Naive thymus-derived CD4-positive, alpha-beta T cell (primary cell): ENCODE measurements at regions of chr13 and their contacts with region 1.

Region 1: GRCh38 chr13:20475927-20476691 is 49.5 kb downstream of the CRYL1 start:
- DNase-seq: peak; percentile 46 to 90 (median 84)
- ATAC-seq: peak; percentile 96
- H3K4me3 ChIP-seq: peak overlapping the region; percentile 59
- H3K4me3 Mint-ChIP-seq: peak overlapping the region; percentile 77 to 92 (median 86)
- H3K27ac ChIP-seq: peak overlapping the region; percentile 77
- H3K27ac Mint-ChIP-seq: peak overlapping the region; percentile 89 to 99 (median 98)
- H3K4me1 ChIP-seq: peaks cover 21 to 25% of the 10 kb centered on the region in 2 donors
- H3K4me1 Mint-ChIP-seq: peaks cover 18 to 79% (median 55%) of the 10 kb centered on the region in 7 donors
- H3K27me3 ChIP-seq: no peaks in the 10 kb centered on the region
- H3K27me3 Mint-ChIP-seq: peaks cover 0 to 5% (median 0%) of the 10 kb centered on the region in 5 donors

Region 2: GRCh38 chr13:19782049-19782726 is 693.9 kb before region 1 on chr13:
- CTCF ChIA-PET with region 1: no interaction called
- POLR2A ChIA-PET with region 1: no interaction called
- intact Hi-C with region 1: loop called in 1 of 2 experiments (anchors 10 kb)
- DNase-seq: peak; percentile 26 to 61 (median 49)
- ATAC-seq: peak; percentile 63
- H3K4me3 ChIP-seq: peak overlapping the region; percentile 99
- H3K4me3 Mint-ChIP-seq: peak overlapping the region; percentile 96 to 100 (median 98)
- H3K27ac ChIP-seq: peak overlapping the region; percentile 98
- H3K27ac Mint-ChIP-seq: peak overlapping the region; percentile 96 to 100 (median 99)
- H3K4me1 ChIP-seq: peaks cover 0 to 8% of the 10 kb centered on the region in 2 donors
- H3K4me1 Mint-ChIP-seq: peaks cover 0 to 13% (median 10%) of the 10 kb centered on the region in 7 donors
- H3K27me3 ChIP-seq: no peaks in the 10 kb centered on the region
- H3K27me3 Mint-ChIP-seq: peaks cover 0 to 5% (median 0%) of the 10 kb centered on the region in 5 donors

Region 3: DNA sequence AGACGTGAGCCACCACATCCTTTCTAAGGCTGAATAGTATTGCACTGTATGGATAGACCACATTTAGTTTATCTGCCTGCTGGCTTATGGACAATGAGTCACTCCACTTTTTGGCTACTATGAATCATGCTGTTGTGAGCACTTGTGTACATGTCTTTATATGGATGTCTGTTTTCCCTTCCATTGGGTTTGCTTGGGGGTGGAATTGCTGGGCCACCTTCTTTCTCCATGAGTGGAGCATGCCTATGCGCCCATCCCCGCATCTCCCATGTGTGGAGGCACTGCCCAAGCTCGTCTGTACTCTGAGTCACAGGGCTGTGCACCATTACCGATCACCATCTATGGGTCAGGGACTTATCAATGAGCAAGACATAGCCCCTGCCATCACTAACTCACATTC is 116.8 kb before region 1 on chr13:
- CTCF ChIA-PET with region 1: no interaction called
- POLR2A ChIA-PET with region 1: no interaction called
- intact Hi-C with region 1: loop called in 1 of 2 experiments (anchors 10 kb)
- DNase-seq: no peak
- ATAC-seq: peak; percentile 42
- H3K4me3 ChIP-seq: no peak overlapping the region
- H3K4me3 Mint-ChIP-seq: no peak overlapping the region
- H3K27ac ChIP-seq: no peak overlapping the region
- H3K27ac Mint-ChIP-seq: no peak overlapping the region
- H3K4me1 ChIP-seq: no peaks in the 10 kb centered on the region
- H3K4me1 Mint-ChIP-seq: peaks cover 0 to 13% (median 0%) of the 10 kb centered on the region in 7 donors
- H3K27me3 ChIP-seq: no peaks in the 10 kb centered on the region
- H3K27me3 Mint-ChIP-seq: no peaks in the 10 kb centered on the region

Region 4: DNA sequence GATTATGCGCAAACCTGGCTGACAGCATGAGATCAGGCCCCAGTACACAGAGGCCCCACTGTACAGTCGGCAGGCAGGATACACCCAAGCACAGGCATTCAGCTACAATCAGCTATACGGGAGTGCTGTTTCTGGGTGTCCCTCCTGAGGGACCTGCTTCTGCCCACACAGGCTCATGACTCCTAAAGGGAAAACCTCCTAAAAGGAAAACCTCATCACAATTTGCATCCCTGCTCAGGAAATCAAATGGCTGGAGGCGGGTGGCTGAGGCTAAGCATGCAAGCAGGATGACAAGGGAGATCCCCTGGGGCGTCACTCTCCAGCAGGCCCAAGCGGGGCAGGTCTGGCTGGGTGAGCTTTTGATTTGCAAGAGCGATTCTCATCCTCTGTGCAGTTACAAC is 50.3 kb before region 1 on chr13:
- CTCF ChIA-PET with region 1: interaction called, 3 read pairs
- POLR2A ChIA-PET with region 1: no interaction called
- intact Hi-C with region 1: loop called in 1 of 2 experiments (anchors 5 kb)
- DNase-seq: no peak
- ATAC-seq: no peak
- H3K4me3 ChIP-seq: no peak overlapping the region
- H3K4me3 Mint-ChIP-seq: no peak overlapping the region
- H3K27ac ChIP-seq: no peak overlapping the region
- H3K27ac Mint-ChIP-seq: no peak overlapping the region
- H3K4me1 ChIP-seq: no peaks in the 10 kb centered on the region
- H3K4me1 Mint-ChIP-seq: peaks cover 0 to 25% (median 8%) of the 10 kb centered on the region in 7 donors
- H3K27me3 ChIP-seq: no peaks in the 10 kb centered on the region
- H3K27me3 Mint-ChIP-seq: peaks cover 0 to 3% (median 0%) of the 10 kb centered on the region in 5 donors

Region 5: GRCh38 chr13:20525690-20526544 is 49.8 kb after region 1 on chr13 and contains the start of gene CRYL1:
- CTCF ChIA-PET with region 1: no interaction called
- POLR2A ChIA-PET with region 1: no interaction called
- intact Hi-C with region 1: loop called in 1 of 2 experiments (anchors 1 kb)
- DNase-seq: peak; percentile 56 to 78 (median 68)
- ATAC-seq: peak; percentile 92
- H3K4me3 ChIP-seq: peak within 1 kb of the TSS; percentile 68
- H3K4me3 Mint-ChIP-seq: peak within 1 kb of the TSS; percentile 76 to 94 (median 87)
- H3K27ac ChIP-seq: peak within 1 kb of the TSS; percentile 65
- H3K27ac Mint-ChIP-seq: peak within 1 kb of the TSS; percentile 66 to 96 (median 88)
- H3K4me1 ChIP-seq: peaks cover 0 to 7% of the 10 kb centered on the region in 2 donors
- H3K4me1 Mint-ChIP-seq: peaks cover 11 to 40% (median 25%) of the 10 kb centered on the region in 7 donors
- H3K27me3 ChIP-seq: no peaks in the 10 kb centered on the region
- H3K27me3 Mint-ChIP-seq: peaks cover 0 to 9% (median 0%) of the 10 kb centered on the region in 5 donors
- total RNA-seq, gene CRYL1: 12.3 to 21.2 (median 16.3) TPM

Region 6: GRCh38 chr13:20773194-20774080 is 297.3 kb after region 1 on chr13 and contains the start of gene EEF1AKMT1:
- CTCF ChIA-PET with region 1: no interaction called
- POLR2A ChIA-PET with region 1: interaction called, 7 read pairs
- intact Hi-C with region 1: loop called in 1 of 2 experiments (anchors 1 kb)
- DNase-seq: peak; percentile 88 to 98 (median 94)
- ATAC-seq: peak; percentile 93
- H3K4me3 ChIP-seq: peak within 1 kb of the TSS; percentile 90
- H3K4me3 Mint-ChIP-seq: peak within 1 kb of the TSS; percentile 85 to 99 (median 94)
- H3K27ac ChIP-seq: peak within 1 kb of the TSS; percentile 93
- H3K27ac Mint-ChIP-seq: peak within 1 kb of the TSS; percentile 94 to 100 (median 99)
- H3K4me1 ChIP-seq: peaks cover 9 to 16% of the 10 kb centered on the region in 2 donors
- H3K4me1 Mint-ChIP-seq: peaks cover 19 to 60% (median 53%) of the 10 kb centered on the region in 7 donors
- H3K27me3 ChIP-seq: no peaks in the 10 kb centered on the region
- H3K27me3 Mint-ChIP-seq: no peaks in the 10 kb centered on the region
- total RNA-seq, gene EEF1AKMT1: 4.2 to 11.2 (median 8.5) TPM

Region 7: DNA sequence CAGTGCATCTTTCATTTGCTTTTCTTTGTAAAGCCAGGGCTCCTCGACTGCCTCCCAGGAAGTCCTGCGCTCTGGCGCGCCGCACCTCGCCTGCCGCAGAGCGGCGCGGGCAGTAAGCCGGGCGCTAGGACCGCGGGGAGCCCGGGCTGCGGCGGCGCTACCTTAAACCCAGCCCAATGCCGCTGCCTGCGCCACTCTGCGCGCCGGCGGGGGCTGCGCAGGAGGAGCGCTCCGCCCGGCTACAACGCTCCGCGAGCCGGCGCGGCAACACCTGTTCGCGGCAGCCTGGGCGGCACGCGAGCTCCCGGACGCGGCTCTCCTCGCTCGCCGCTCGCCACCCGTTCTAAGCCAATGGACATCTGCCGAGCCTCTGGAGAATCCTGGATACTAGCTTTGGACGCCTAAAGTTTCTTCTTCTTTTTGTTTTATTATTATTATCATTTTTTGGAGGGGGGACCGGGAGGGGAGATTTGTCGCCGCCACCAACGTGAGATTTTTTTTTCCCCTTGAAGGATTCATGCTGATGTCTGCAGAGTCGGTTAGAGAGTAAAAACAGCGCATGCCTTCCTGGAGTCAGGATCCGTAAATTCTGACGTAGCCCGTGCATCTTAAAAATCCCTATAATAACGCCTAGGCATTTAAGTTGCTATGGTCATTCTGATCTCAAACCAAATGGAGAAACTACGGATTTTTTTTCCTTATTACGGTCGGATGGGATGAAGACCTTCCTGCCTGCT is 1194.9 kb after region 1 on chr13 and contains the start of gene FGF9:
- CTCF ChIA-PET with region 1: no interaction called
- POLR2A ChIA-PET with region 1: no interaction called
- intact Hi-C with region 1: loop called in 1 of 2 experiments (anchors 2 kb)
- DNase-seq: peak; percentile 76 to 88 (median 86)
- ATAC-seq: peak; percentile 89
- H3K4me3 ChIP-seq: peak within 1 kb of the TSS; percentile 92
- H3K4me3 Mint-ChIP-seq: peak within 1 kb of the TSS; percentile 88 to 98 (median 93)
- H3K27ac ChIP-seq: peak within 1 kb of the TSS; percentile 48
- H3K27ac Mint-ChIP-seq: peak within 1 kb of the TSS; percentile 61 to 94 (median 78)
- H3K4me1 ChIP-seq: peaks cover 19 to 32% of the 10 kb centered on the region in 2 donors
- H3K4me1 Mint-ChIP-seq: peaks cover 27 to 45% (median 44%) of the 10 kb centered on the region in 7 donors
- H3K27me3 ChIP-seq: peaks cover 0 to 4% of the 10 kb centered on the region in 2 donors
- H3K27me3 Mint-ChIP-seq: peaks cover 5 to 77% (median 20%) of the 10 kb centered on the region in 5 donors
- total RNA-seq, gene FGF9: 0.19 to 5.6 (median 2.0) TPM